Gastrocnemius medialis (tissue), 4 donors: ENCODE measurements at regions of chr2 and their contacts with region 1.

Region 1: DNA sequence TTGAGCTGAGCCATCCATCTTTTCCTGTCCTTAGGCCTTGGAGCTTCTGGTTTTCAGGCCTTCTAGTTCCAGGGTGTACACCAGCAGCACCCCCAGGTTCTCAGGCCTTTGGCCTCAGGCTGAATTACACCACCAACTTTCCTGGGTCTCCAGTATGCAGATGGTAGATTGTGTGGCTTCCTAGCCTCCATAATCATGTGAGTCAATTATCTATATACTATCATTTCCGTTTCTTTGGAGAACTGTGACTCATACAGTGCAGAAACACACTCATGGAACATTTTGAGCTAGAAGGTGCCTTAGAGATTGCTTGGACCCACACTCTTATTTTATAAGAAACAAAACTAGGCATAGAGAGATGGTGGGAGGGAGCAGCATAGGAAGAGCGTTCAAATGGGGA is 167.4 kb downstream of the NCK2 start:
- DNase-seq: no peak
- ATAC-seq: no peak
- H3K4me3 ChIP-seq: no peak overlapping the region
- H3K27ac ChIP-seq: peak overlapping the region in 2 of 4 donors; percentile 86 to 91
- H3K4me1 ChIP-seq: peaks cover 35 to 37% of the 10 kb centered on the region in 2 donors
- H3K27me3 ChIP-seq: no peaks in the 10 kb centered on the region
- CTCF ChIP-seq: no peak
- POLR2A ChIP-seq: no peak

Region 2: DNA sequence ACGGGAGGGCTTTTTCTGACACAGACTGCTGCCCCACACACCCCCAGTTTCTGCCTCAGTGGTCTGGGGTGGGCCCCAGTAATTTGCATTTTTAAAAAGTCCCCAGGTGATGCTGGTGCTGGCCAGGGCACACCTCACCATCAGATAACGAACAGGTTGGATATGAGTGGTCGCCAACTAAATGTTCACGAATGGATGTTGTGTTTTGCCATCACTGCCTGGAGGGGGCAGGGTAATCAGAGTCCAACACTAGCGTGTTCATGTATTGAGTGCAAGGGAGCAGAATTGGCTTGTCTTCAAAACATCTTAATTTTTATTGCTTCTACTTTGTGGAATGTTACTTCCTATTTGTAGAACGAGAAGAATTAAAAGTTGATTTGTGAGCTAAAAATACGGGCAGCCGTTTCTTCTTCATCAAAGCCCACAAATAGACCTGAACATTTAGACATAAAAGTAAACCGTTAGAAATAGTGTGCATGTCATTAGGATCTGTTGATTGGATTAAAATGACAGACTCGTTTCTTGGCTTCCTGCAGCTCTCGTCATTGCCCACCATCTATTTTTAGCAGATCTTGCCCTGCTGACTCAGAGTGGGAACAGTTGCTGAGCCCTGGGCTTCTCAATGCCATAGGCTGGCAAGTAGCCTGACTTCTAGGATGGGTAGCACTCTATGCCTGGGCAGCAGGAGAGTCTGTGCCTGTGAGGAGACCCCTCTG is 122.2 kb before region 1 on chr2:
- in situ Hi-C with region 1: no loop called
- intact Hi-C with region 1: loop called (anchors 5 kb)
- DNase-seq: peak; percentile 78 to 88
- ATAC-seq: peak; percentile 97 to 100
- H3K4me3 ChIP-seq: peak overlapping the region; percentile 23 to 45 (median 25)
- H3K27ac ChIP-seq: peak overlapping the region; percentile 76 to 88 (median 80)
- H3K4me1 ChIP-seq: peaks cover 37 to 57% of the 10 kb centered on the region in 2 donors
- H3K27me3 ChIP-seq: no peaks in the 10 kb centered on the region
- CTCF ChIP-seq: no peak
- POLR2A ChIP-seq: no peak

Region 3: GRCh38 chr2:105969555-105969954 is 57.5 kb after region 1 on chr2:
- in situ Hi-C with region 1: no loop called
- intact Hi-C with region 1: no loop called
- DNase-seq: no peak
- ATAC-seq: no peak
- H3K4me3 ChIP-seq: no peak overlapping the region
- H3K27ac ChIP-seq: no peak overlapping the region
- H3K4me1 ChIP-seq: no peaks in the 10 kb centered on the region
- H3K27me3 ChIP-seq: no peaks in the 10 kb centered on the region
- CTCF ChIP-seq: no peak
- POLR2A ChIP-seq: no peak